CD8-positive, alpha-beta T cell (primary cell): ENCODE measurements at regions of chr4 and their contacts with region 1.

Region 1: GRCh38 chr4:13654158-13654797 is 26.8 kb upstream of the BOD1L1 start:
- DNase-seq: peak; percentile 58 to 85 (median 77)
- ATAC-seq: peak; percentile 95
- H3K4me3 ChIP-seq: peak overlapping the region; percentile 54 to 65
- H3K4me3 Mint-ChIP-seq: peak overlapping the region; percentile 87
- H3K27ac ChIP-seq: no peak overlapping the region
- H3K27ac Mint-ChIP-seq: no peak overlapping the region
- H3K4me1 ChIP-seq: peaks cover 4% of the 10 kb centered on the region
- H3K4me1 Mint-ChIP-seq: peaks cover 16% of the 10 kb centered on the region
- H3K27me3 ChIP-seq: no peaks in the 10 kb centered on the region
- H3K27me3 Mint-ChIP-seq: peaks cover 12% of the 10 kb centered on the region
- CTCF ChIP-seq: peak; percentile 80

Region 2: GRCh38 chr4:13627606-13628301 is 26.5 kb before region 1 on chr4 and contains the start of gene BOD1L1:
- CTCF ChIA-PET with region 1: interaction called, 27 read pairs
- POLR2A ChIA-PET with region 1: interaction called, 10 read pairs
- intact Hi-C with region 1: loop called in 1 of 2 experiments (anchors 1 kb)
- DNase-seq: peak; percentile 43 to 93 (median 79)
- ATAC-seq: peak; percentile 70
- H3K4me3 ChIP-seq: peak within 1 kb of the TSS; percentile 65 to 81
- H3K4me3 Mint-ChIP-seq: peak within 1 kb of the TSS; percentile 92
- H3K27ac ChIP-seq: peak within 1 kb of the TSS; percentile 80 to 88
- H3K27ac Mint-ChIP-seq: peak within 1 kb of the TSS; percentile 97
- H3K4me1 ChIP-seq: peaks cover 26% of the 10 kb centered on the region
- H3K4me1 Mint-ChIP-seq: peaks cover 50% of the 10 kb centered on the region
- H3K27me3 ChIP-seq: no peaks in the 10 kb centered on the region
- H3K27me3 Mint-ChIP-seq: no peaks in the 10 kb centered on the region
- CTCF ChIP-seq: no peak
- total RNA-seq, gene BOD1L1: 44.0 to 48.3 TPM

Region 3: DNA sequence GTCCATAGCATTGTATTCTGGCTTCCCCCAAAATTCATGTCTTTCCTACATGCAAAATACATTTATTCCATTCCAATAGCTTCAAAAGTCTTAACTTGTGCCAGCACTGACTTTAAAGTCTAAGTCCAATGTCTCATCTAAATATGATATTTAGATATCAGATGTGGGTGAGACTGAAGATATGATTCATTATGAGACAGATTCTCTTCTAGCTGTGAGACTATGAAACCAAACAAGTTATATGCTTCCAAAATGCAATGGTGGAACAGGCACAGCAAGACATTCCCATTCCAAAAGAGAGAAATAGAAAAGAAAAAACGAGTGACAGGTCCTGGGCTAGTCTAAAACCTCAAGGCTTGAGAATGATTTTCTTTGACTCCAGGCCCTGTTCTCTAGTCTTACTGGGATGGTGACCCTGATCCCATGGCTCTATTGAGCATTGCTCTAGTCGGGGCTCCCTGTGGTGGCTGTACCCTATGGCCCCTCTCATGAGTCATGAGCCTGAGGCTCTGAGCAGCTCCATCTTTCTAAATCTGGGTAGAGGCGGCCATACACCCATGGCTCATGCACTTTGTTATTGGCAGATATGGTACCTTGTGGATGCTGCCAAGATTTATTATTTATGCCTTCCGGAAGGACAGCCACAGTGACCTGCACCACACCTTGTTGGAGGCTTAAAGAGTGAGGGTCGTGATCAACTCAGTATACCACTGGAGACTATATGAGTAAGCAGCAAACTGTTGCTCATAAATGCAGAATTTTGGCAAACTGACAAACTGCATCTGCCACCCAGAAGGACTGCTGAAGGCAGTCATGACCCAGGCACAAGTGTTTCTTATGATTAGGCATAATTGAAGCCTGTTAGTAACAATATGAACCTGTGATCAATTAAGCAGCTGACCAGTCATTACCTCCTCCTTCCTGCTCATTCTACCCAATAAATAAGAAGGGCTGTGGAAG is 11.7 kb after region 1 on chr4:
- CTCF ChIA-PET with region 1: interaction called, 21 read pairs
- POLR2A ChIA-PET with region 1: no interaction called
- intact Hi-C with region 1: no loop called
- DNase-seq: no peak
- ATAC-seq: no peak
- H3K4me3 ChIP-seq: no peak overlapping the region
- H3K4me3 Mint-ChIP-seq: no peak overlapping the region
- H3K27ac ChIP-seq: no peak overlapping the region
- H3K27ac Mint-ChIP-seq: no peak overlapping the region
- H3K4me1 ChIP-seq: no peaks in the 10 kb centered on the region
- H3K4me1 Mint-ChIP-seq: no peaks in the 10 kb centered on the region
- H3K27me3 ChIP-seq: no peaks in the 10 kb centered on the region
- H3K27me3 Mint-ChIP-seq: peaks cover 12% of the 10 kb centered on the region
- CTCF ChIP-seq: no peak

Region 4: GRCh38 chr4:15001869-15002658 is 1347.8 kb after region 1 on chr4 and contains the start of gene CPEB2:
- CTCF ChIA-PET with region 1: no interaction called
- POLR2A ChIA-PET with region 1: no interaction called
- intact Hi-C with region 1: loop called (anchors 2 to 10 kb)
- DNase-seq: peak; percentile 84 to 97 (median 91)
- ATAC-seq: peak; percentile 70
- H3K4me3 ChIP-seq: peak within 1 kb of the TSS; percentile 77 to 97
- H3K4me3 Mint-ChIP-seq: peak within 1 kb of the TSS; percentile 93
- H3K27ac ChIP-seq: peak within 1 kb of the TSS; percentile 100
- H3K27ac Mint-ChIP-seq: peak within 1 kb of the TSS; percentile 98
- H3K4me1 ChIP-seq: peaks cover 11% of the 10 kb centered on the region
- H3K4me1 Mint-ChIP-seq: peaks cover 26% of the 10 kb centered on the region
- H3K27me3 ChIP-seq: no peaks in the 10 kb centered on the region
- H3K27me3 Mint-ChIP-seq: no peaks in the 10 kb centered on the region
- CTCF ChIP-seq: no peak
- total RNA-seq, gene CPEB2: 17.7 to 21.8 TPM

Region 5: GRCh38 chr4:15396157-15396800 is 1742.0 kb after region 1 on chr4:
- CTCF ChIA-PET with region 1: no interaction called
- POLR2A ChIA-PET with region 1: no interaction called
- intact Hi-C with region 1: loop called (anchors 5 to 10 kb)
- DNase-seq: peak; percentile 5 to 69 (median 43)
- ATAC-seq: peak; percentile 85
- H3K4me3 ChIP-seq: no peak overlapping the region
- H3K4me3 Mint-ChIP-seq: no peak overlapping the region
- H3K27ac ChIP-seq: no peak overlapping the region
- H3K27ac Mint-ChIP-seq: no peak overlapping the region
- H3K4me1 ChIP-seq: peaks cover 16% of the 10 kb centered on the region
- H3K4me1 Mint-ChIP-seq: peaks cover 29% of the 10 kb centered on the region
- H3K27me3 ChIP-seq: no peaks in the 10 kb centered on the region
- H3K27me3 Mint-ChIP-seq: no peaks in the 10 kb centered on the region
- CTCF ChIP-seq: peak; percentile 72